ENCODE measurements at regions of chr13 and their contacts with region 1.

Region 1: DNA sequence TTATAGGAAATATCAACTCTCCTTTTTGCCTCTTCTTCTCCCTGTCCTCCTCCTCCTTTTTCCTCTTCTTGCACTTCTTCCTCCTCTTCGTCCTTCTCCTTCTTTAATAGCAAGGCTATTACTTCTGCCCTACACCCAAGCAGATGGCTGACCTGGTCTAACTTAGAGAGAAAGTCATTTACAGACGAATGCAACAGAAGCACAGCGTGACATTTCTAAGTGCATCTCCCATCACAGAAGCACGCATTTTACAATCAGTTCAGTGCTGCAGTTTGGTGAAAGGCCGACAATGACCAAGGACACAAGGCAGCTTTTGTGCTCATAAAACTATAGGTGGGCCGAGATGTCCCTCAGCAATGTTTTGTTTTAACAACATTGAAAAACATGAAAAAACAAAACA is 231.6 kb downstream of the FGF14 start:
- DNase-seq: no peak
- H3K4me3 ChIP-seq: no peak overlapping the region
- H3K27ac ChIP-seq: no peak overlapping the region
- H3K4me1 ChIP-seq: no peaks in the 10 kb centered on the region
- H3K27me3 ChIP-seq: no peaks in the 10 kb centered on the region
- CTCF ChIP-seq: no peak
- EP300 ChIP-seq: no peak
- POLR2A ChIP-seq: no peak

Region 2: DNA sequence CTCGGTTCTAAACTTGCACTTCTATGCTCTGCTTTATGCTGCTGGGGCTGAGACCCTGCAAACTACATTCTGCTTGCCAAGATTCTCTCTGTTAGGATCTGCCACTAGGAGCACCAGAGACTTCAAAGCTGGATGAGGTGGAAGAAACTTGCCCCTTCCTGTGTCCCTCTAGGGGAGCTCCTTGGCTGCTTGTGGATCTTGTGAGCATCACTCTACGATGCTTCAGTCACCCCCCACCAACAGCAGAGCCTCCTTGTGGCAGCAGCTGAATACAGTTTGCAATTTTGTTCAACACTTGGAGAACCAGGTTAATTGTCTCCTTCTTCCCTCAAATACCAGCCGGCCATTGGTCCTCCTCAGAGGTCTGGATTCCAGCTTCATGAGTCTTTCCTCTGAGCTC is 79.1 kb before region 1 on chr13:
- in situ Hi-C with region 1: no loop called
- intact Hi-C with region 1: no loop called
- DNase-seq: no peak
- H3K4me3 ChIP-seq: no peak overlapping the region
- H3K27ac ChIP-seq: no peak overlapping the region
- H3K4me1 ChIP-seq: no peaks in the 10 kb centered on the region
- H3K27me3 ChIP-seq: no peaks in the 10 kb centered on the region
- CTCF ChIP-seq: peak in 1 of 5 experiments; percentile 15
- EP300 ChIP-seq: no peak
- POLR2A ChIP-seq: no peak

Region 3: DNA sequence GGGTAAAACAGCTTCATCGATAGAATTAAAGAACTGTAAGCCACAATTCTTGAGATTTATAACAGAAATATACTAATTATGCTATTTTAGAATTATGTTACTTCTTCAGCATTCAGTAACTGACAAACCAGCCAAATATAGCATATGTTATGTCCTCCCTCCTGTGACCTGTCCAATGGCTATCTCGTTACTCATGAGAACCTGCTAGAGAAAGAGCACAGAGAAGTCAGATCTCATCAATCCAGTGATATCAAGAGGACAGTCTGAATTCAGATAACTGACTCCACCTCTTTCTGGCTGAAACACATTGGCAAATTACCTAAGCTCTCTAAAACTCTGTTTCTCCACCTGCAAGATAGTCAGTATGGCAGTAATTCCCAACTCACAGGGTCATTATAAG is 61.2 kb after region 1 on chr13:
- in situ Hi-C with region 1: no loop called
- intact Hi-C with region 1: loop called (anchors 2 kb)
- DNase-seq: no peak
- H3K4me3 ChIP-seq: no peak overlapping the region
- H3K27ac ChIP-seq: no peak overlapping the region
- H3K4me1 ChIP-seq: no peaks in the 10 kb centered on the region
- H3K27me3 ChIP-seq: no peaks in the 10 kb centered on the region
- CTCF ChIP-seq: no peak
- EP300 ChIP-seq: no peak
- POLR2A ChIP-seq: no peak

Measured in transverse colon (tissue), 4 donors.